Activated CD4-positive, alpha-beta T cell treated with anti-CD3 and anti-CD28 coated beads for 36 hours (primary cell): ENCODE measurements at regions of chr10 and their contacts with region 1.

Region 1: DNA sequence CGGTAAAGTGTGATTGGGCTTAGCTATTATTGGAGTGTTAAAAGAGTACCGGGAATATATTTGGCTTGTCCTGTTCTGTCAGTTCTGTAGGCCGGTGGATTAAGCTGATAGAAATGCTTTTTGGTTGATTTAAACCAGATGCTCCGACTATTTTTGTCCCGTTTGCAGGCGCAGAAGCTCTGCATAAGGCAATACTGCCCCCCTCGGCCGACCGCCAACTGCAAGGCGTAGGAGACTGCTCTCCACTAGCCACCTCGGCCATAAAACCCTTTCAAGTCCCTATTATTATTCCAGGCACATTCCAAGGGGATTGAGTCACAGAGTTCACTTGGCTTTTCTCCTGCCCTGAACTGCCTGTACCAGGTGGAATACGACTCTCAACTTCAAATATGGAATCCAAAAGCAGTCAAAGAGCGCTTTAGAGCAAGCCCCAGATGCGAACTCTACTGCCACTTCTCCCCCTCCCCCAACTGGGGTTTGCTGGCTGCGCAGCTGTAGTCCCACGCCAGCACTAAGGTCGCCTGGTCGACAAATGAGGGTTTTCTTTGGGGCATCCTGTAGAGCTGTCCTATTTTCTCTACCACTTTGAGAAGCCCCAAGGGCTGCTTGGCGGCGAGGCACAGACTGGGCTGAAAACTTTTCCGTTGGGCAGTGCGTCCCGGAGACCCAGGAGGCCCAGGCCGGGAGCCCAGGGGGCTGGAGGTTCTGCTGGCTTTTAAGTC is 108.3 kb downstream of the REEP3 start:
- DNase-seq: peak; percentile 92
- ATAC-seq: peak; percentile 72
- H3K4me3 Mint-ChIP-seq: peak overlapping the region; percentile 80
- H3K27ac Mint-ChIP-seq: peak overlapping the region; percentile 86
- H3K4me1 Mint-ChIP-seq: peaks cover 25% of the 10 kb centered on the region
- H3K27me3 Mint-ChIP-seq: no peaks in the 10 kb centered on the region

Region 2: DNA sequence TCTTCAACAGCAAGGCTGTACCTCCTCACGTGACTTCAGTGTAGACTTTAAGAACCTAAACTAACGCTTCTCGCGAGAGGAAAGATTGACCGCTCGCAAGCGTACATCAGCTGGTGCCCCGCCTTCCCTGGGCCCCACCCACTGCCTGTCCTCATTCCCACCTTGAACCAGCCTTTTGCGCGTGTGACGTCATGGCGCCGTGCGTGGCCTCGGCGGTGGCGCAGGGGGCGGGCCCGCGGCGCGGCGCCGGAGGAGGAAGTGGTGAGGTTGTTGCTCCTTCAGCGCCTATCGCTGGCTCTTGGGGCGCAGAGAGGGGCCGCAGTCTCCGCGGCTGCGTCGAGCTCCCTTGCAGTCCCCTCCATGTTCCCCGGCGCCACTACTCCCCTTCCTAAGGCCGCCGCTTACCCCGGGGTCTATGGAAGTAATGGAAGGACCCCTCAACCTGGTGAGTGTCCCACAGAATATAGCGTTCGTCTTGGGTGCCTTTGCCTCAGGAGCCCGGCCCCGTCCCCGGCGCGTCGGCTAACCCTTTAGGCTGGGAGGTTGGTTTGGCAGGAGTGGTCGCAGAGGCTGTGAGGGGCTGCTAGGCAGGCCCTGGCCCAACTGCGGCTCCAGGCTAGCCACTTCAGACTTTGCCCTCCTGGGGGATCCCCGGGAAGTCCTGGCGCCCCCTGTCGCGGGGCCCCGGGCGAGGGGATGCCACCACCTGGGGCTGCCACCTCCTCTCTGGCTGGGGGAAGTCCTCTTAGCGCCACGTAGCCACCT is 496.3 kb before region 1 on chr10 and contains the start of gene NRBF2:
- CTCF ChIA-PET with region 1: interaction called, 3 read pairs
- POLR2A ChIA-PET with region 1: no interaction called
- intact Hi-C with region 1: loop called in 1 of 2 experiments (anchors 1 kb)
- DNase-seq: peak; percentile 99
- ATAC-seq: peak; percentile 90
- H3K4me3 Mint-ChIP-seq: peak within 1 kb of the TSS; percentile 81
- H3K27ac Mint-ChIP-seq: peak within 1 kb of the TSS; percentile 92
- H3K4me1 Mint-ChIP-seq: peaks cover 46% of the 10 kb centered on the region
- H3K27me3 Mint-ChIP-seq: no peaks in the 10 kb centered on the region
- total RNA-seq, gene NRBF2: 23.9 to 24.1 TPM

Region 3: GRCh38 chr10:63166742-63167258 is 462.7 kb before region 1 on chr10:
- CTCF ChIA-PET with region 1: interaction called, 66 read pairs
- POLR2A ChIA-PET with region 1: no interaction called
- intact Hi-C with region 1: loop called (anchors 1 kb)
- DNase-seq: no peak
- ATAC-seq: peak; percentile 70
- H3K4me3 Mint-ChIP-seq: no peak overlapping the region
- H3K27ac Mint-ChIP-seq: no peak overlapping the region
- H3K4me1 Mint-ChIP-seq: peaks cover 25% of the 10 kb centered on the region
- H3K27me3 Mint-ChIP-seq: no peaks in the 10 kb centered on the region

Region 4: DNA sequence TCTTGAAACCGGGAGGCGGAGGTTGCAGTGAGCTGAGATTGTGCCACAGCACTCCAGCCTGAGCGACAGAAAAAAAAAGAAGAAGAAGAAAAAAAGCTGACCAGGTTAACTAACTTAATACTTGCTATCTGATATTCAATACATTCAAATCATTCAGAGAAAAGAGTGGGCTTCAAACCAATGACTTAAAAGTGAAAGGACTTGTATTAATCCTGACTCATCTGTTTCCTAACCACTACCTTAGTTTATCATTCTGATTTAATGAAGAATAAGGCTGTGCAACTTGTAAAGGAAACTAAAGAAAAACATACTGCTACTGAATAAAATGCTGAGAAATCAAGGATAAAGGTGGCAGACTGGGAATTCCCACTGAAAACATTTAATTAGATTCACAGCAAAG is 368.0 kb before region 1 on chr10:
- CTCF ChIA-PET with region 1: interaction called, 17 read pairs
- POLR2A ChIA-PET with region 1: no interaction called
- intact Hi-C with region 1: no loop called
- DNase-seq: no peak
- ATAC-seq: peak; percentile 38
- H3K4me3 Mint-ChIP-seq: no peak overlapping the region
- H3K27ac Mint-ChIP-seq: no peak overlapping the region
- H3K4me1 Mint-ChIP-seq: peaks cover 68% of the 10 kb centered on the region
- H3K27me3 Mint-ChIP-seq: no peaks in the 10 kb centered on the region

Region 5: DNA sequence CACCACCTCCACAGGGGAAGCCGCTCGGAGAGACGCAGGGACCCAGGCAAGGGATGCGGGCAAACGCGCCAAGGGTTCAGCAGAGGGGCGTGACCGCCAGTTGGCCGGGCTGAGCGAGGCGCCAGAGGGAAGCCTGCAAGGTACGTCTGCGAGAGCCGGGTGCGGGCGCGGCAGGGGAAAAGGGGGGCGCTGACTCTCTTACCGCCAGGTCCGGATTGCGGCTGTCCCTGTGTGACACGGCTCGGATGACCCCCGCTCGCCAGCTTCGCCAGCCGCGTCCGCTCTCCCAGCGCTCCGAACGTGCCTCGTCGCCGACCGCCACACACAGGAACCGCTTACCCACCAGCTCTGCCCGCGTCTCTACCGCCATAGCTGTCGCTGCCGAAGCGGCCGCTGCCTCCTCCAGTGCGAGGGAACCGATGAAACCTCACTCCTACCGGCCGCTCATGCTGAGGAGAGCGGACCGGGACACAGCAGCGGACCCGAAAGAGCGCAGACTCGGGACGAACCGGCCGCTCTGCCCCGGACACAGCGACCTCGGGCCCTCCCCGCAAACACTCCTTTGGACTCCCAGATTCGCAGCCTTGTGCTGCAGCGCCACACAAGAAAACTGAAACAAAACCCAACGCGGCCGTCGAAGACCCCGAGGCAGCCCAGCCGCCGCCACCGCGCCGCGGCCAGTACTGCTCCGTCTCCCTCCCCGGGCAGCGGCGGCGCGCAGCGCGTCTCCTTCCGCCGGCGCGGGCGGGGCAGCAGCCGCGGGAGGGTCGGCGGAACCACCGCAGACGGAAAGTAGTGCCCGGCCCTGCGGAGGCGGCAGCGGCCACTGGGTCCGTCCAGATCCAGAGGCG is 164.0 kb before region 1 on chr10 and contains the start of gene JMJD1C:
- CTCF ChIA-PET with region 1: interaction called, 6 read pairs
- POLR2A ChIA-PET with region 1: interaction called, 4 read pairs
- intact Hi-C with region 1: loop called (anchors 1 to 5 kb)
- DNase-seq: peak; percentile 76
- ATAC-seq: peak; percentile 73
- H3K4me3 Mint-ChIP-seq: peak within 1 kb of the TSS; percentile 94
- H3K27ac Mint-ChIP-seq: peak within 1 kb of the TSS; percentile 72
- H3K4me1 Mint-ChIP-seq: peaks cover 23% of the 10 kb centered on the region
- H3K27me3 Mint-ChIP-seq: no peaks in the 10 kb centered on the region
- total RNA-seq, gene JMJD1C: 41.5 to 42.5 TPM

Region 6: GRCh38 chr10:63618552-63618951 is 11.0 kb before region 1 on chr10:
- CTCF ChIA-PET with region 1: interaction called, 20 read pairs
- POLR2A ChIA-PET with region 1: interaction called, 3 read pairs
- intact Hi-C with region 1: no loop called
- DNase-seq: no peak
- ATAC-seq: no peak
- H3K4me3 Mint-ChIP-seq: no peak overlapping the region
- H3K27ac Mint-ChIP-seq: no peak overlapping the region
- H3K4me1 Mint-ChIP-seq: no peaks in the 10 kb centered on the region
- H3K27me3 Mint-ChIP-seq: no peaks in the 10 kb centered on the region

Region 7: DNA sequence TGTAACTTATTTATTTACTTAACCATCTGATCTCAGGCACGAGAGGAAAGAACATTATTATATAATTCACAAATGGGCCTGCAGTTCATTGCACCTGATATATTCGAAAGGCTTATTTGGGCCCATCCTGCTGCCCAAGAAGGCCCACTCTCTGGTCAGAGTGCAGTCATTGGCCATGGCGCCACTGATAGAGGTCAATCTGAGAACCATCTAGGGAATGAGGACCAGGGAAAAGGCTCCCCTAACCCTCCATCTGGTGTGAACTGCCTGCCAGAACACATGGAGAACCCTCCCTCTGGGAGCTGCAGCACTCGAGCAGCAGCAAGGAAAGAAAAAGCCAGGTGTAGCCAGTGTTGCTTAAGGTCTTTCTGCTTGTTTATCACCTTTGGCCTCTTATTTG is 28.2 kb after region 1 on chr10:
- CTCF ChIA-PET with region 1: no interaction called
- POLR2A ChIA-PET with region 1: no interaction called
- intact Hi-C with region 1: no loop called
- DNase-seq: no peak
- ATAC-seq: no peak
- H3K4me3 Mint-ChIP-seq: no peak overlapping the region
- H3K27ac Mint-ChIP-seq: no peak overlapping the region
- H3K4me1 Mint-ChIP-seq: no peaks in the 10 kb centered on the region
- H3K27me3 Mint-ChIP-seq: no peaks in the 10 kb centered on the region